Mammary epithelial cell (primary cell): ENCODE measurements at regions of chr18 and their contacts with region 1.

Region 1: DNA sequence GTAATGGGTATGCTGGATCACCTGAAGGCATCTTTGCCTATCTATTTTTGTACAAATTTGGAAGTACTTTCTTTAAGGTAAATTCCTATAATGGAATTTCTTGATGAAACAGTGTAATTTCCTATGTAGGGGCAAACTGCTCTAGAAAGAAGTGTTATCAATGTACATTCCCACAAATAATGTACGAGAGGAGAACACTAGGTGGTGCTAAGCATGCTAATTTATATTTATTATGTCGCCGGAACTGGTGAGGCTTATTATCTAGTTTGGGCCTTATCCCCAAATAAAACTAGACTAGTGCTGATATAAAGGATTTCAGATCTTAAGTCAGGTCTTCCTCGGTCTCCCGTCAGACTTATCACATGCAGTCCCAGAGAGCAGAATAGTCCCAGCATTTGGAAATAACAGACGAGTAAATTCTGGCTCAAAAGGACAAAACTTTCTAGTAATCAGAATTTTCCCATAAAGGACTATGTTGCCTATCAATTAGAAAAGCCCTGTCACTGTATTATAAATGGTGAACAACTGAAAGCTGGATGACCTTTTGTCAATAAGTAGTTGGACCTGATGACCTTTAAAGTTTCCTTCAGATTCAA is 86.9 kb upstream of the RBBP8 start:
- DNase-seq: no peak
- H3K4me3 ChIP-seq: no peak overlapping the region
- H3K27ac ChIP-seq: peak overlapping the region; percentile 85
- H3K4me1 ChIP-seq: peaks cover 75% of the 10 kb centered on the region
- H3K27me3 ChIP-seq: no peaks in the 10 kb centered on the region
- CTCF ChIP-seq: peak; percentile 53 to 68

Region 2: DNA sequence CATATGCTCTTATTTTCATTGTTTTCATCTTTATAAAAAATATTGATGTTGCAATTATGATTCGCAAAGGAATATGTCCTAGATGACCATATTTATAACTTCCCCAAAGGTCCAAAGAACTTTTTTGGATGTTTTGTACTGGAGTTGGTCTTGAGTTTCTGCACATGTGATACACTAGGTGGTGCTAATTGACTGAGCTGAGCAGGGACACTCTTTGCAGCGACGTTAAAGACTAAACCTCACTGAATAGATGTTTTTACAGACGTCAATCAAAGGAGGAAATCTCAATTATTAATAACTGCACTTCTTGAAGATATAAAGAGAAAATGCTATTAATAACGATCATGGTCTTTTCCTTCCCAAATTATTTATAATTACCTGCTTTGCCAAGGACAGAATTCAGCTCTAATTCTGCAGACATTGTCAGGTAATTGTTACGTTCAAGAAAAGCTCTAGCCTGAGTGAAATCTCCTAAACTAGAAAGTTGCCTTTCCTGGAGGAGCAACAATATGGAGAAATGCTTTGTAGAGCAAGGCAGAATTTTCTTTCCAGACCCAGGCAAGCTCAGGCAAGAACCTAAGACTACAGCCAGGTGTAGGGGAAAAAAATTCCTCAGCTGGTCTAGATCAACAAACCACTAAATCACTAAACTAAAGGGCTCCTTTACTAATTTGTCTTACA is 32.4 kb before region 1 on chr18:
- CTCF ChIA-PET with region 1: no interaction called
- dilution Hi-C with region 1: no loop called
- in situ Hi-C with region 1: no loop called
- intact Hi-C with region 1: loop called (anchors 1 kb)
- DNase-seq: peak; percentile 60
- H3K4me3 ChIP-seq: peak overlapping the region in 2 of 3 experiments; percentile 17 to 25
- H3K27ac ChIP-seq: peak overlapping the region; percentile 68
- H3K4me1 ChIP-seq: peaks cover 30% of the 10 kb centered on the region
- H3K27me3 ChIP-seq: no peaks in the 10 kb centered on the region
- CTCF ChIP-seq: peak; percentile 77 to 81

Region 3: DNA sequence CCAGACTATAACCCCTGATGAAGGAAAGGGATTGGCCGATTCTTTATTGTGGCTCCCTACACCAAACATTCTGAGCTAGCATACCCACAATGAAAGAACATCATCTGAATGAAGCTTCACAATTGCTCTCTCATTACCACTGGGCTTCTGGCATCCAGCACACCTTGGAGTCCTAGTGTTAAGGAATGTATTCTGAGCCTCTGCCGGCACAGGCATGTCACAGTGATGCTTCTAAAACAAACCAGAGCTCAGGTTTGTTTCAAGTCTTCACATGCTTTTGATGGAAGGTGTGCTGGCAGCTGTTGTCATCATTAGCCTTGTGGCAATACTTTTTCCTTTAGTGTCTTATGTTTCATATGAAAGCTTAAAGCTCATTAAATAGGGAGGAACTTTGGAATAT is 10.7 kb after region 1 on chr18:
- CTCF ChIA-PET with region 1: interaction called, 3 read pairs
- dilution Hi-C with region 1: no loop called
- in situ Hi-C with region 1: no loop called
- intact Hi-C with region 1: loop called (anchors 1 kb)
- DNase-seq: peak; percentile 96
- H3K4me3 ChIP-seq: no peak overlapping the region
- H3K27ac ChIP-seq: peak overlapping the region; percentile 96
- H3K4me1 ChIP-seq: peaks cover 26% of the 10 kb centered on the region
- H3K27me3 ChIP-seq: no peaks in the 10 kb centered on the region
- CTCF ChIP-seq: no peak

Region 4: GRCh38 chr18:22913857-22914256 is 67.7 kb after region 1 on chr18:
- CTCF ChIA-PET with region 1: interaction called, 6 read pairs
- dilution Hi-C with region 1: no loop called
- in situ Hi-C with region 1: no loop called
- intact Hi-C with region 1: loop called (anchors 1 kb)
- DNase-seq: peak; percentile 96
- H3K4me3 ChIP-seq: peak overlapping the region; percentile 41 to 99 (median 83)
- H3K27ac ChIP-seq: peak overlapping the region; percentile 83
- H3K4me1 ChIP-seq: peaks cover 26% of the 10 kb centered on the region
- H3K27me3 ChIP-seq: no peaks in the 10 kb centered on the region
- CTCF ChIP-seq: no peak

Region 5: DNA sequence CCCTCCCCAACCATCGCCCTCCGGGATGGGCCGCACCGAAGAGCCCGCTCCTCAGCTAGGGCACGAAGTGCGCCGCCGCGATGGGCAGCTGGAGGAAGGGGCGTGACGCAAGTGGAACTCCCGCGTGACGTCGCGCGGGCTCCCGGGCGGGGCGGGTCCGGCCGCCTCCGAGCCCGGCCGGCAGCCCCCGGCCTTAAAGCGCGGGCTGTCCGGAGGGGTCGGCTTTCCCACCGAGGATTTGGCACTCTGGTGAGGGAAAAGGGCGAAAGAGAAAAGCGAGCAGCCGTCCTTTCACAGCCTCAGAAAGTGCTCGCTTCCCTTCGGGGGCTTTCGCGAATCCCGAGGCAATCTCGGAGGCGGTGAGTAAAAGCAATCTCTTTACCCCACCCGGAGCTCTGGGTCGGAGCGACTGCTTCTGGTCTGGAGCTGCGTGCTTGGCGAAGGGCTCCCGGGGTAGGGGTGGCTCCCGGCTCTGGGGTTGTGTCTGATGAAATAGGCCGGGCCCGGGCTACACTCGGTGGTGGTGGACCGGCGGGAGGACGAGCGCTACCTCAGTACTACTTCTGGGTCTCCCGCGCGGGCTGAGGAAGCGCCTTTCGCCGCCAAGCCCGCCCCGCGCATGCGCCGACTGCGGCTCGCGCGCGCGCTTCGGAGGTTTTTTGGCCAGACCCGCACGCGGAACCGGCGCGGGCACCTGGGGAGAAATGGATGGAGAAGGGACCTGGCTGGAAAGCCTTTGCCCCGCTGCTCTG is 87.2 kb after region 1 on chr18 and contains the start of gene RBBP8:
- CTCF ChIA-PET with region 1: interaction called, 3 read pairs
- dilution Hi-C with region 1: no loop called
- in situ Hi-C with region 1: loop called (anchors 10 to 25 kb)
- intact Hi-C with region 1: loop called (anchors 1 kb)
- DNase-seq: peak; percentile 79
- H3K4me3 ChIP-seq: peak within 1 kb of the TSS; percentile 49 to 77 (median 66)
- H3K27ac ChIP-seq: peak within 1 kb of the TSS; percentile 95
- H3K4me1 ChIP-seq: peaks cover 36% of the 10 kb centered on the region
- H3K27me3 ChIP-seq: no peaks in the 10 kb centered on the region
- CTCF ChIP-seq: no peak
- total RNA-seq, gene RBBP8: 165 to 692 TPM